ENCODE measurements at regions of chr7 and their contacts with region 1.

Region 1: GRCh38 chr7:112571852-112572607 is 91.2 kb downstream of the LSMEM1 start:
- DNase-seq: no peak
- H3K4me3 ChIP-seq: no peak overlapping the region
- H3K27ac ChIP-seq: no peak overlapping the region
- H3K4me1 ChIP-seq: peaks cover 0 to 4% (median 0%) of the 10 kb centered on the region in 4 experiments; a peak in 2 of 7 replicates
- H3K27me3 ChIP-seq: no peaks in the 10 kb centered on the region
- CTCF ChIP-seq: peak in 2 of 3 experiments; percentile 44 to 49; a peak in 3 of 4 replicates
- EP300 ChIP-seq: no peak
- POLR2A ChIP-seq: no peak
- RAD21 ChIP-seq: peak; percentile 45 to 65

Region 2: GRCh38 chr7:112481833-112482670 is 90.0 kb before region 1 on chr7:
- CTCF ChIA-PET with region 1: no interaction called
- POLR2A ChIA-PET with region 1: no interaction called
- DNase-seq: peak in 1 of 2 experiments; percentile 13
- H3K4me3 ChIP-seq: no peak overlapping the region
- H3K27ac ChIP-seq: no peak overlapping the region
- H3K4me1 ChIP-seq: no peaks in the 10 kb centered on the region
- H3K27me3 ChIP-seq: no peaks in the 10 kb centered on the region
- CTCF ChIP-seq: no peak
- EP300 ChIP-seq: no peak
- POLR2A ChIP-seq: no peak
- RAD21 ChIP-seq: no peak

Region 3: DNA sequence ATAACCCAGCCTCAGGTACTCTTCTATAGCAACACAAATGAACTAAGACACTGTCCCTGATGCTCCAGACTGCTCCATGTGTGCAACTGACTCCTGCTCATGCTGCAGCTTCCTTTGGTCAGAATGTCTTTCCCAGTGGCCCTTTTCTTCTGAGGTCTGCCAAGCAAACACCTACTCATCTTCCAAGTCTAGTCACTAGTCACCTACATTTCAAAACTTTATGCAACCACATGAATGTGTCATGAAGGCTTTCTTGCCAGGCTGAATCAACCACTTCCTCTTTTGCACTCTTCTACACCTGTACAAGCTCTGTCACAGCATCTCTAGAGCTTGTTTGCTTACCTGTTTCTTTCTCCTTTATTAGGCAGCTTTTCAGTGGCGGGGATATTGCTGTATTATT is 15.4 kb before region 1 on chr7:
- CTCF ChIA-PET with region 1: interaction called, 11 read pairs
- POLR2A ChIA-PET with region 1: no interaction called
- DNase-seq: no peak
- H3K4me3 ChIP-seq: no peak overlapping the region
- H3K27ac ChIP-seq: no peak overlapping the region
- H3K4me1 ChIP-seq: no peaks in the 10 kb centered on the region
- H3K27me3 ChIP-seq: no peaks in the 10 kb centered on the region
- CTCF ChIP-seq: no peak
- EP300 ChIP-seq: no peak
- POLR2A ChIP-seq: no peak
- RAD21 ChIP-seq: no peak

Region 4: GRCh38 chr7:112584290-112584689 is 12.3 kb after region 1 on chr7:
- CTCF ChIA-PET with region 1: interaction called, 21 read pairs
- POLR2A ChIA-PET with region 1: no interaction called
- DNase-seq: no peak
- H3K4me3 ChIP-seq: no peak overlapping the region
- H3K27ac ChIP-seq: no peak overlapping the region
- H3K4me1 ChIP-seq: 0 out of 7 replicates have a peak, but pooled peaks cover 0 to 4% (median 0%) of the 10 kb centered on the region in 4 experiments
- H3K27me3 ChIP-seq: no peaks in the 10 kb centered on the region
- CTCF ChIP-seq: no peak
- EP300 ChIP-seq: no peak
- POLR2A ChIP-seq: no peak
- RAD21 ChIP-seq: no peak